Caco-2 (cell line): ENCODE measurements at regions of chr22 and their contacts with region 1.

Region 1: GRCh38 chr22:16783930-16784354 is 41.3 kb downstream of the XKR3 start:
- DNase-seq: peak in 1 of 2 experiments; percentile 16
- H3K4me3 ChIP-seq: no peak overlapping the region
- H3K4me3 Mint-ChIP-seq: no peak overlapping the region
- H3K27ac Mint-ChIP-seq: no peak overlapping the region
- H3K4me1 ChIP-seq: no peaks in the 10 kb centered on the region
- H3K4me1 Mint-ChIP-seq: no peaks in the 10 kb centered on the region
- H3K27me3 ChIP-seq: no peaks in the 10 kb centered on the region
- H3K27me3 Mint-ChIP-seq: peaks cover 4% of the 10 kb centered on the region
- CTCF ChIP-seq: peak; percentile 39 to 60

Region 2: DNA sequence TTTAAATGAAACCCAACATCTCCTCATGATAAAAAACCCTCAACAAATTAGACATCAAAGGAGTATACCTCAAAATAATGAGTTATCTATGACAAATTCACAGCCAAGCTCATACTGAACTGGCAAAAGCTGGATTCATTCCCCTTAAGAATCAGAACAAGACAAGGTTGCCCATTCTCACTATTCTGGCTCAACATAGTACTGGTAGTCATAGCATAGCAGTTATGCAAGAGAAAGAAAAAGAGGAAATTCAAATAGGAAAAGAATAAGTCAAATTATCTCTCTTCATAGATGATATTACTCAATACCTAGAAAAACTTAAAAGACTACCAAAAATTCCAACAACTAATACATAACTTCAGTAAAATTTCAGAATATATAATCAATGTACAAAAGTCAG is 70.7 kb after region 1 on chr22:
- CTCF ChIA-PET with region 1: no interaction called
- POLR2A ChIA-PET with region 1: no interaction called
- intact Hi-C with region 1: loop called (anchors 10 kb)
- DNase-seq: no peak
- H3K4me3 ChIP-seq: no peak overlapping the region
- H3K4me3 Mint-ChIP-seq: no peak overlapping the region
- H3K27ac Mint-ChIP-seq: no peak overlapping the region
- H3K4me1 ChIP-seq: no peaks in the 10 kb centered on the region
- H3K4me1 Mint-ChIP-seq: no peaks in the 10 kb centered on the region
- H3K27me3 ChIP-seq: no peaks in the 10 kb centered on the region
- H3K27me3 Mint-ChIP-seq: no peaks in the 10 kb centered on the region
- CTCF ChIP-seq: no peak